Activated T-helper 1 cell treated with anti-CD3 and anti-CD28 coated beads, Interleukin-12 subunit alpha, Interleukin-12 subunit beta, Interleukin-2, Interleukin-4 antibody, amounts not matched to agents 30 ng/mL and 10 ng/mL and 1 ng/mL, durations not matched to agents 14 hours and 24 hours and 36 hours (primary cell): ENCODE measurements at regions of chr14 and their contacts with region 1.

Region 1: GRCh38 chr14:72904840-72905561 is 11.1 kb upstream of the DPF3 start:
- DNase-seq: peak; percentile 55
- H3K4me3 Mint-ChIP-seq: no peak overlapping the region
- H3K27ac Mint-ChIP-seq: no peak overlapping the region
- H3K4me1 Mint-ChIP-seq: peaks cover 31% of the 10 kb centered on the region
- H3K27me3 Mint-ChIP-seq: peaks cover 19% of the 10 kb centered on the region

Region 2: GRCh38 chr14:72443991-72444441 is 461.0 kb before region 1 on chr14:
- intact Hi-C with region 1: loop called (anchors 5 kb)
- DNase-seq: peak; percentile 27
- H3K4me3 Mint-ChIP-seq: peak overlapping the region; percentile 65
- H3K27ac Mint-ChIP-seq: peak overlapping the region; percentile 76
- H3K4me1 Mint-ChIP-seq: peaks cover 86% of the 10 kb centered on the region
- H3K27me3 Mint-ChIP-seq: no peaks in the 10 kb centered on the region

Region 3: GRCh38 chr14:72844524-72844923 is 60.5 kb before region 1 on chr14:
- intact Hi-C with region 1: no loop called
- DNase-seq: no peak
- H3K4me3 Mint-ChIP-seq: no peak overlapping the region
- H3K27ac Mint-ChIP-seq: no peak overlapping the region
- H3K4me1 Mint-ChIP-seq: peaks cover 5% of the 10 kb centered on the region
- H3K27me3 Mint-ChIP-seq: peaks cover 10% of the 10 kb centered on the region

Region 4: DNA sequence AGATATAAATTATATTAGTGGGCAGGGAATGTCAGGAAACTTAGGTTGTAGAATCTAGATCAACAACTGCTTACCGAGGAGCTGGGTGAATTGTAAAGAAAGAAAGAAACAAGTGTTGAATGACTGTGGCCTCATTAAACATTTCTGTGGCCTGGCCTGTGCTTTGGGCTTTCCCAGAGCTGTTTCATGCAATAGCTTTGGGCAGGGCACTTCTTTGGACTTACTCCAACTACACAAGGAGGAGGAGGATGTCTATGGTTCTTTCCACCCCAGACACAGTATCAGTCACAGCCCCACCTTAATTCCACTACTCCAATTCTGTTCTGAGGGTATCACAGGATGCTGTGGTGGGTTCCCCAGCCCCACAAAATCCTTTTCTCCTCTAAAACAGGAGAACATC is 49.1 kb before region 1 on chr14:
- intact Hi-C with region 1: no loop called
- DNase-seq: no peak
- H3K4me3 Mint-ChIP-seq: no peak overlapping the region
- H3K27ac Mint-ChIP-seq: no peak overlapping the region
- H3K4me1 Mint-ChIP-seq: peaks cover 23% of the 10 kb centered on the region
- H3K27me3 Mint-ChIP-seq: no peaks in the 10 kb centered on the region

Region 5: GRCh38 chr14:72948481-72949138 is 43.6 kb after region 1 on chr14:
- intact Hi-C with region 1: loop called (anchors 1 kb)
- DNase-seq: peak; percentile 41
- H3K4me3 Mint-ChIP-seq: no peak overlapping the region
- H3K27ac Mint-ChIP-seq: no peak overlapping the region
- H3K4me1 Mint-ChIP-seq: peaks cover 5% of the 10 kb centered on the region
- H3K27me3 Mint-ChIP-seq: no peaks in the 10 kb centered on the region

Region 6: DNA sequence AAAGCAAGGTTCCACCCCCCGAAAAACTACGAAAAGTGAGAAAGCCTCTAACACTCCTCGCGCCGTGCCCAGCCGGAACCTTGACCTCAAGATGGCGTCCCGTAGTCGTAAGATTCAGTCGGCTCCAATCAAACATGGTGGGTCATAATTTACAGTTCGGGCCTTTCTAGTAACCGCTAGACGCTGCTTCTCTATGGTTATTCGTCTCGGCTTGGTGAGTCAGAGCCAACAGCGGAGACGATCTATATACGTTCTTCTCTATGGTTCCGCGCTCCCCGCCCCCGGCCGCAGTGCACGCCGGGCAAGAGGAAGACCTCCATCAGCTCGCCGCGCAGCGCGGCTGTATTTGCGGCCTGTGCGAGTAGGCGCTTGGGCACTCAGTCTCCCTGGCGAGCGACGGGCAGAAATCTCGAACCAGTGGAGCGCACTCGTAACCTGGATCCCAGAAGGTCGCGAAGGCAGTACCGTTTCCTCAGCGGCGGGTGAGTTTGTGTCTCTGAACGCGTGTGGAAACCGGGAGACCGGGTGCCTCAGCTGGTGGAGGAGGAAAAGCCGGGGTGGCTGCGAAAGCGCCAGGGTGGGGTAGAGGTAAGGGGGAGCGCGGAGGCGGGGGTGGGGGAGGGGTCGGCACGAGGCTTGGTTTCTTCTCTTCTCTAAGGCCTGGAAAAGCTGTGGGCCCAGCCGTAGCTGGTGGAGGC is 153.4 kb after region 1 on chr14 and contains the start of gene RBM25:
- intact Hi-C with region 1: no loop called
- DNase-seq: peak; percentile 94
- H3K4me3 Mint-ChIP-seq: no peak within 1 kb of the TSS
- H3K27ac Mint-ChIP-seq: no peak within 1 kb of the TSS
- H3K4me1 Mint-ChIP-seq: peaks cover 32% of the 10 kb centered on the region
- H3K27me3 Mint-ChIP-seq: no peaks in the 10 kb centered on the region
- total RNA-seq, gene RBM25: 128 and 129 TPM in 2 replicates